Colonic mucosa (tissue), 4 donors: ENCODE measurements at regions of chr6 and their contacts with region 1.

Region 1: GRCh38 chr6:147970975-147971374 is 371.7 kb upstream of the SASH1 start:
- DNase-seq: no peak
- H3K4me3 ChIP-seq: no peak overlapping the region
- H3K27ac ChIP-seq: no peak overlapping the region
- H3K4me1 ChIP-seq: no peaks in the 10 kb centered on the region
- H3K27me3 ChIP-seq: no peaks in the 10 kb centered on the region
- CTCF ChIP-seq: peak; percentile 22

Region 2: DNA sequence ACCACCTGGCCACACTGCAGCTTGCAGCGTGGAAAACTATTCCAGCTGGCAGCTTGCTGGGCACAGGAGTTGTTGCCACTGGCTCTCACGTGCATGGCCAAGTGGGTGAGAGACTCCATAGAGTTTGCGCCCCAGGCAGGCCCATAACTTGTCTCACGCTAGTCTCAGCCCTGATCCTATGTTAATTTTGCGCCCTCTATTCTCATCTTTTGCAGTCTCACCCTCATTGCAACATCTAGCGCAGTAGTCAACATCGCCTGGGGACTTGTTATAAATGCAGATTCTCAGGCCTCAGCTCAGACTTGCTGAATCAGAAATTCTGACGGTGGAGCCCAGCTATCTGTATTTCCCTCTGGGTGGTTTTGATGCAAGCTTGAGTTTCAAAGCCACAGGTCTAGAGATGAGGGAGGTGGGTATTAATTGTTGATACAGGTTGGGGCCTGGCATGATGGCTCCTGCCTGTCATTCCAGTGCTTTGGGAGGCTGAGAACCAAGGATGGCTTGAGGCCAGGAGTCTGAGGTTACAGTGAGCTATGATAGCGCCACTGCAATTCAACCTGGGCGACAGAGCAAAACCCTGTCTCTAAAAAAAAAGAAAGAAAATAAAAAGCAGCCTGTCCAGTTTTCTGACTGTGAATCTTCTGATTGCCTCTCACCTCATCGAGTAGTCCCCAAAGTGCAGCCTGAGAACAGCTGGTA is 186.7 kb after region 1 on chr6:
- intact Hi-C with region 1: loop called (anchors 10 kb)
- DNase-seq: no peak
- H3K4me3 ChIP-seq: no peak overlapping the region
- H3K27ac ChIP-seq: no peak overlapping the region
- H3K4me1 ChIP-seq: no peaks in the 10 kb centered on the region
- H3K27me3 ChIP-seq: no peaks in the 10 kb centered on the region
- CTCF ChIP-seq: no peak

Region 3: DNA sequence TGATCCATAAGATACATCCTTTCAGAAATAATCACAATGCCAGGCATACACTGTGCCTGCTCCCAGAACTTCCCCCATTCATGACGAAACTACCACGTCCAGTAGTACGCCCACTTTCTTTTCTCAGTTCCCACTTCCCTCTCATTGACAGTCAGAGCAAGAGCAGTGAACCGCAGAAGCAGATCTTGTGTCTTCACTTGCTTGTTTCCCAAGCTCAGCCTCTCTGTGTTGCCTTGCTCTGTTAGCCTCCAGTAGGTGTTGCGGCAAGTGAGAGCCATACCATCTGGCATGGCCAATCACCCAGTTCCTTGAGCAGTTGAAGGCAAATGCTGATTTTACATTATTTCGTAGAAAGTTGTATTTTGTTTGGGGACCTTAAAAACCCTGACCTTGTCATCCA is 787.5 kb after region 1 on chr6:
- intact Hi-C with region 1: no loop called
- DNase-seq: peak; percentile 31
- H3K4me3 ChIP-seq: no peak overlapping the region
- H3K27ac ChIP-seq: no peak overlapping the region
- H3K4me1 ChIP-seq: no peaks in the 10 kb centered on the region
- H3K27me3 ChIP-seq: no peaks in the 10 kb centered on the region
- CTCF ChIP-seq: no peak